Activated T-helper 2 cell treated with anti-CD3 and anti-CD28 coated beads, Interferon-gamma antibody, Interleukin-2, Interleukin-4, amounts not matched to agents 10 μg/mL and 5 μg/mL and 100 μg/mL, durations not matched to agents 14 hours and 24 hours and 36 hours (primary cell): ENCODE measurements at regions of chrX and their contacts with region 1.

Region 1: DNA sequence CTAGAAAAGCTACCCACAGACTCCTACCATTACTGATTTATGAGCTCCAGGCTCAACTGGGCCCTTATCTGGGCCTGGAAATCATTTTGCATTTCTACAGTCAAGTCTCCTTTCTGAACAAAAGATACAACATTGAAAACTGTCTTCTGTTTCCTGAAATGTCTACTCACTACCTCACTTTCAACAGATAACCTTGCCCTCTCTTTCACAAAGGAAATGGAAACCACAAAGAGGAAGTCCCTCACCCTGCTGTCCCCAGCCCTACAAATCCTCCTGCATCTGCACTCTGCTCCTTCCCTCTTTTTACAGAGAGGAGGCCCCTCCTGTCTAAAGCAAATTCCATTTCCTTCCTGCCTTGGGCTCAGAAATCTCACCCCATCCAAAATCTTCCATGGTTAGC is 24.8 kb upstream of the CYBB start:
- DNase-seq: peak; percentile 21
- H3K4me3 Mint-ChIP-seq: no peak overlapping the region
- H3K27ac Mint-ChIP-seq: no peak overlapping the region
- H3K4me1 Mint-ChIP-seq: peaks cover 15% of the 10 kb centered on the region
- H3K27me3 Mint-ChIP-seq: no peaks in the 10 kb centered on the region

Region 2: DNA sequence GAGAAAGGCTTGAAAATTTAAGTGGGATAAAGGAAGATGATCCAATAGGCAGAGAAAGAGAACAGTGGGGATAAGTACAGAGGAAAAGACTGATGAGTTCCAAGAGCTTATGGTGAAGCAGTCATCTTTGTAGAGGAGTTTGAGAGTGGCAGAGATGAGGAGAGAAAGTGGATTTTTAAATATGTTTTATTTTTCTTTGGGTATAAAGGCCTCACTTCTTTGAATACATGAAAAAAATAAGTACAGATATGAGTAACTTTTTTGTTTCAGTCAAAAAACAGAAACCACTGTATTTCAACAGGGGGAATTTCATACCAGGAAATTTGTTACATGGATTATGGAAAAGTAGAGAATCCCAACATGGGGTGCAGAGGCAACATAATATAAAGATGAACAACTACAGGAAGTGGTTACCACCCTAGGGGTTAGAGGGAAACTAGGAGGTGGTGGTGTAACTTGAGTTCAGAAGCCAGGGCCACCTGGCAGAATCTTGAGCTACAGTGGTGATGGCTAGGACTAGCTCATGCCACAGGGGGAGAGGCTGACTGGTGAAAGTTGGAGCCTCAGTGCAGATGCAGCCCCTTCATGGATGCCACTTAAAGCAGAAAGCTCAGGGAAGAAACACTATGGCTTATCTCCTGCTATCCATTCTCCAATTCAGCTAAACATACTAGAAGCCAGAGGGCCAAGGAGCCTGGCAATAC is 21.4 kb after region 1 on chrX:
- intact Hi-C with region 1: loop called (anchors 1 kb)
- DNase-seq: no peak
- H3K4me3 Mint-ChIP-seq: peak overlapping the region; percentile 26
- H3K27ac Mint-ChIP-seq: peak overlapping the region; percentile 28
- H3K4me1 Mint-ChIP-seq: peaks cover 20% of the 10 kb centered on the region
- H3K27me3 Mint-ChIP-seq: no peaks in the 10 kb centered on the region

Region 3: DNA sequence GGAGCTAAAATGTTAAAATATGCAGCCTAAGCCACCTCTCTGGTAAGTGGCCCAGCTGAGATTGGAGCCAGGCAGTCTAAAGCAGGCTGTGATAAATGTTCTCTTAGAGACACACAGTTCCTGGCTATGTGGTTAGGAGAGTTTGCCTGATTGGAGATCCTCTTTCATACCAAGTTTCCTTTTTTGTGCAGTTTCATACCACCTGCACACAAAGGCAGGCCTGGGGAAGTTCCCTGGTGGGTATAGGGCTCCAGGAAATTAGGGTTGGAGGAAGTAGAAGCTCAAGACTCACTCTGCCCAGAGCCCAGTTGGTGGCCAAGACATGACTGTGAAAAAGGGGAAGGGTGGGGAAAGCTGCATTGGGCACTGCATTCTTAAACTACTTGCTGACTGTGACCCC is 41.8 kb after region 1 on chrX:
- intact Hi-C with region 1: loop called (anchors 5 kb)
- DNase-seq: no peak
- H3K4me3 Mint-ChIP-seq: no peak overlapping the region
- H3K27ac Mint-ChIP-seq: no peak overlapping the region
- H3K4me1 Mint-ChIP-seq: peaks cover 3% of the 10 kb centered on the region
- H3K27me3 Mint-ChIP-seq: peaks cover 3% of the 10 kb centered on the region